B cell (primary cell): ENCODE measurements at regions of chr11 and their contacts with region 1.

Region 1: GRCh38 chr11:27362749-27363575 is at the start of gene CCDC34:
- DNase-seq: peak; percentile 93
- ATAC-seq: peak; percentile 97
- H3K4me3 ChIP-seq: peak within 1 kb of the TSS; percentile 59 to 77 (median 64)
- H3K4me3 Mint-ChIP-seq: peak within 1 kb of the TSS; percentile 90
- H3K27ac ChIP-seq: peak within 1 kb of the TSS in 1 of 2 donors; percentile 62
- H3K27ac Mint-ChIP-seq: peak within 1 kb of the TSS; percentile 88
- H3K4me1 ChIP-seq: peaks cover 8 to 14% of the 10 kb centered on the region in 2 donors
- H3K4me1 Mint-ChIP-seq: peaks cover 18% of the 10 kb centered on the region
- H3K27me3 ChIP-seq: no peaks in the 10 kb centered on the region
- H3K27me3 Mint-ChIP-seq: no peaks in the 10 kb centered on the region
- CTCF ChIP-seq: no peak
- total RNA-seq, gene CCDC34: 4.1 and 4.6 TPM in 2 replicates

Region 2: GRCh38 chr11:27084518-27084917 is 278.4 kb before region 1 on chr11:
- CTCF ChIA-PET with region 1: no interaction called
- POLR2A ChIA-PET with region 1: no interaction called
- intact Hi-C with region 1: no loop called
- DNase-seq: no peak
- ATAC-seq: no peak
- H3K4me3 ChIP-seq: no peak overlapping the region
- H3K4me3 Mint-ChIP-seq: no peak overlapping the region
- H3K27ac ChIP-seq: no peak overlapping the region
- H3K27ac Mint-ChIP-seq: no peak overlapping the region
- H3K4me1 ChIP-seq: no peaks in the 10 kb centered on the region
- H3K4me1 Mint-ChIP-seq: no peaks in the 10 kb centered on the region
- H3K27me3 ChIP-seq: no peaks in the 10 kb centered on the region
- H3K27me3 Mint-ChIP-seq: no peaks in the 10 kb centered on the region
- CTCF ChIP-seq: no peak

Region 3: DNA sequence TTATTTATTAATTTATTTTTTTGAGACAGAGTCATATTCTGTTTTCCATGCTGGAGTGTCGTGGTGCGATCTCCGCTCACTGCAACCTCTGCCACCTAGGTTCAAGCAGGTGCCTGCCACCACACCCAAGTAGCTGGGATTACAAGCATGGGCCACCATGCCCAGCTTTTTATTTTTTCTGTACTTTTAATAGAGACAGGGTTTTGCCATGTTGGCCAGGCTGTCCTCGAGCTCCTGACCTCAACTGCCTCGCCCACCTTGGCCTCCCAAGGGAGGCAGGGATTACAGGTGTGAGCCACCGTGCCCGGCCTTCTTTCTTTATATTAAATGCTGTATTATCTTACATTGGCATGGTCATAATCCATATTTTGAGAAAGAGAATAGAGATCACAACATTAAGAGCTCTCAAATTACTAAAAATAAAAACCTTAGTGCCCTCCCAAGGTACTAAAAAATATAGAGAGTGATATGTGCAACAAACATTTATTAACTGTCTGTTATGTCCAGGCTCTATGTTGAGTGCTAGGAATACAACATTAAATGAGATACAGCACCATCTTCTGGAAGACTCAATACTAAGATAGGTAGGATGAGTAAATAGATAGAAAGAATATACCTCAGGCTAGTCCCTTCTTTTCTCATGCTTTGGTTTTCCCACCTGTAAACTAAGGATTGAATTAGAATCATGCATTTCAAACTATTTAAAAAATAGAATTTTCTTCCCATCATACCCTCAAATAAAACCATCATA is 238.3 kb before region 1 on chr11:
- CTCF ChIA-PET with region 1: no interaction called
- POLR2A ChIA-PET with region 1: no interaction called
- intact Hi-C with region 1: no loop called
- DNase-seq: no peak
- ATAC-seq: no peak
- H3K4me3 ChIP-seq: no peak overlapping the region
- H3K4me3 Mint-ChIP-seq: no peak overlapping the region
- H3K27ac ChIP-seq: no peak overlapping the region
- H3K27ac Mint-ChIP-seq: no peak overlapping the region
- H3K4me1 ChIP-seq: no peaks in the 10 kb centered on the region
- H3K4me1 Mint-ChIP-seq: no peaks in the 10 kb centered on the region
- H3K27me3 ChIP-seq: no peaks in the 10 kb centered on the region
- H3K27me3 Mint-ChIP-seq: no peaks in the 10 kb centered on the region
- CTCF ChIP-seq: no peak

Region 4: GRCh38 chr11:27472398-27473016 is 109.5 kb after region 1 on chr11 and contains the start of gene LGR4:
- CTCF ChIA-PET with region 1: no interaction called
- POLR2A ChIA-PET with region 1: no interaction called
- intact Hi-C with region 1: loop called (anchors 2 kb)
- DNase-seq: peak; percentile 80
- ATAC-seq: peak; percentile 88
- H3K4me3 ChIP-seq: peak within 1 kb of the TSS; percentile 52 to 72 (median 66)
- H3K4me3 Mint-ChIP-seq: peak within 1 kb of the TSS; percentile 92
- H3K27ac ChIP-seq: no peak within 1 kb of the TSS
- H3K27ac Mint-ChIP-seq: peak within 1 kb of the TSS; percentile 63
- H3K4me1 ChIP-seq: peaks cover 11% of the 10 kb centered on the region in 2 donors
- H3K4me1 Mint-ChIP-seq: peaks cover 22% of the 10 kb centered on the region
- H3K27me3 ChIP-seq: peaks cover 0 to 8% (median 0%) of the 10 kb centered on the region in 4 experiments
- H3K27me3 Mint-ChIP-seq: peaks cover 4% of the 10 kb centered on the region
- CTCF ChIP-seq: no peak
- total RNA-seq, gene LGR4: 3.3 TPM in 2 replicates

Region 5: GRCh38 chr11:27506200-27507182 is 143.5 kb after region 1 on chr11 and contains the start of gene LIN7C:
- CTCF ChIA-PET with region 1: no interaction called
- POLR2A ChIA-PET with region 1: no interaction called
- intact Hi-C with region 1: loop called (anchors 1 kb)
- DNase-seq: peak; percentile 98
- ATAC-seq: peak; percentile 91
- H3K4me3 ChIP-seq: peak within 1 kb of the TSS; percentile 81 to 99 (median 98)
- H3K4me3 Mint-ChIP-seq: peak within 1 kb of the TSS; percentile 100
- H3K27ac ChIP-seq: peak within 1 kb of the TSS; percentile 96 to 97
- H3K27ac Mint-ChIP-seq: peak within 1 kb of the TSS; percentile 97
- H3K4me1 ChIP-seq: peaks cover 23 to 25% of the 10 kb centered on the region in 2 donors
- H3K4me1 Mint-ChIP-seq: peaks cover 45% of the 10 kb centered on the region
- H3K27me3 ChIP-seq: no peaks in the 10 kb centered on the region
- H3K27me3 Mint-ChIP-seq: no peaks in the 10 kb centered on the region
- CTCF ChIP-seq: no peak
- total RNA-seq, gene LIN7C: 24.2 TPM in 2 replicates

Region 6: GRCh38 chr11:28107748-28108618 is 745.0 kb after region 1 on chr11 and contains the starts of genes KIF18A and METTL15:
- CTCF ChIA-PET with region 1: no interaction called
- POLR2A ChIA-PET with region 1: no interaction called
- intact Hi-C with region 1: loop called (anchors 2 kb)
- DNase-seq: peak; percentile 99
- ATAC-seq: peak; percentile 86
- H3K4me3 ChIP-seq: peak within 1 kb of the TSS; percentile 51 to 95 (median 76)
- H3K4me3 Mint-ChIP-seq: peak within 1 kb of the TSS; percentile 94
- H3K27ac ChIP-seq: peak within 1 kb of the TSS; percentile 89 to 96
- H3K27ac Mint-ChIP-seq: peak within 1 kb of the TSS; percentile 98
- H3K4me1 ChIP-seq: peaks cover 30% of the 10 kb centered on the region in 2 donors
- H3K4me1 Mint-ChIP-seq: peaks cover 52% of the 10 kb centered on the region
- H3K27me3 ChIP-seq: no peaks in the 10 kb centered on the region
- H3K27me3 Mint-ChIP-seq: no peaks in the 10 kb centered on the region
- CTCF ChIP-seq: no peak
- total RNA-seq, gene KIF18A: 4.1 and 4.2 TPM in 2 replicates
- total RNA-seq, gene METTL15: 19.7 and 22.8 TPM in 2 replicates